B cell (primary cell): ENCODE measurements at regions of chr17 and their contacts with region 1.

Region 1: GRCh38 chr17:82065638-82066303 is at the start of gene DUS1L:
- DNase-seq: peak; percentile 84
- ATAC-seq: peak; percentile 89
- H3K4me3 ChIP-seq: peak within 1 kb of the TSS; percentile 18 to 76 (median 74)
- H3K4me3 Mint-ChIP-seq: peak within 1 kb of the TSS; percentile 81
- H3K27ac ChIP-seq: peak within 1 kb of the TSS; percentile 79 to 90
- H3K27ac Mint-ChIP-seq: peak within 1 kb of the TSS; percentile 89
- H3K4me1 ChIP-seq: peaks cover 16 to 26% of the 10 kb centered on the region in 2 donors
- H3K4me1 Mint-ChIP-seq: peaks cover 15% of the 10 kb centered on the region
- H3K27me3 ChIP-seq: no peaks in the 10 kb centered on the region
- H3K27me3 Mint-ChIP-seq: no peaks in the 10 kb centered on the region
- CTCF ChIP-seq: no peak
- total RNA-seq, gene DUS1L: 109 and 112 TPM in 2 replicates

Region 2: GRCh38 chr17:82003411-82004381 is 62.1 kb before region 1 on chr17:
- CTCF ChIA-PET with region 1: no interaction called
- POLR2A ChIA-PET with region 1: no interaction called
- intact Hi-C with region 1: no loop called
- DNase-seq: no peak
- ATAC-seq: no peak
- H3K4me3 ChIP-seq: no peak overlapping the region
- H3K4me3 Mint-ChIP-seq: no peak overlapping the region
- H3K27ac ChIP-seq: no peak overlapping the region
- H3K27ac Mint-ChIP-seq: no peak overlapping the region
- H3K4me1 ChIP-seq: no peaks in the 10 kb centered on the region
- H3K4me1 Mint-ChIP-seq: no peaks in the 10 kb centered on the region
- H3K27me3 ChIP-seq: no peaks in the 10 kb centered on the region
- H3K27me3 Mint-ChIP-seq: no peaks in the 10 kb centered on the region
- CTCF ChIP-seq: no peak

Region 3: DNA sequence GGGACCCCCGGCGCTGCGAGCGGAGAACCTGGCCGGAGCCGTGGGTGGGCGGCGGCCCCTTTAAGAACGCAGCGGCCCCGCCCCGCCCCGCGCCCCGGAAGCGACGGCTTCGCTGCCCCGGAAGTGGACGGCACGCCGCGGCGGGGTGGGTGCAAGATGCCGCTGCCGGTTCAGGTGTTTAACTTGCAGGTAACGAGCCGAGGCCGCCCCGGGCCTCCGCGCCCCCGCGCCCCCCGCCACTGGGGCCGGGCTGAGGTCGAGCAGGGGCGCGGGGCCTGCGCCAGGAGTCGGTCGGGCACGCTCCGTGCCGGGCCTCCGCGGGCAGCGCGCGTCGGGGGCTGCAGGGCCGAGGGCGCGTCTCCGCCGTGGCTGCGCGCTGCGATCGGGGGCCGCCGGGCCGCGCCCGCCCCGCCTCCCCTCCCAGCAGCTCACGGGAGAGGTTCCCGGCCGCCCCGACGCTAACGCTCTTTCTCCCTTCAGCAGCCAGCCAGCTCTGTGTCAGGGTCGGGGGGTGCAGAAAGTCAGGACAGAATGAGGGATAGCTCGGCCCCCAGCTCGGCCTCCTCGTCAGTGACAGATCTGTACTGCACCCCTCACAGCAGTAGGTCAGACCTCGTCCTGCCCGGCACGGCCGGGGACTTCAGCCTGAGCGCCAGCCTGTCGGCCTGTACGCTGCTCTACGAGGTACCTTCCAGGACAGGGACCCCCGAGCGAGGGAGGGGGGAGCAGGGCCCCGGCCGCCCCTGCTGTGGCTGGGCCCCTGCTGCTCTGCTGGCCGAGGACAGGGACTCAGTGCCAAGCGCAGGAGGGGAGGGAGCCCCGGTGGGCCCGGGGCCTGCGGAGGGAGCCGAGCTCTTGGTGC is 13.8 kb before region 1 on chr17 and contains the starts of genes GPS1 and RFNG:
- CTCF ChIA-PET with region 1: interaction called, 3 read pairs
- POLR2A ChIA-PET with region 1: interaction called, 3 read pairs
- intact Hi-C with region 1: loop called (anchors 1 kb)
- DNase-seq: peak; percentile 82
- ATAC-seq: peak; percentile 88
- H3K4me3 ChIP-seq: peak within 1 kb of the TSS; percentile 54 to 88 (median 63)
- H3K4me3 Mint-ChIP-seq: peak within 1 kb of the TSS; percentile 84
- H3K27ac ChIP-seq: peak within 1 kb of the TSS in 1 of 2 donors; percentile 30
- H3K27ac Mint-ChIP-seq: peak within 1 kb of the TSS; percentile 86
- H3K4me1 ChIP-seq: peaks cover 20 to 34% of the 10 kb centered on the region in 2 donors
- H3K4me1 Mint-ChIP-seq: peaks cover 14% of the 10 kb centered on the region
- H3K27me3 ChIP-seq: no peaks in the 10 kb centered on the region
- H3K27me3 Mint-ChIP-seq: no peaks in the 10 kb centered on the region
- CTCF ChIP-seq: no peak
- total RNA-seq, gene GPS1: 79.5 and 80.5 TPM in 2 replicates
- total RNA-seq, gene RFNG: 30.1 TPM in 2 replicates